Activated CD8-positive, alpha-beta memory T cell treated with anti-CD3 and anti-CD28 coated beads, Interleukin-2, amount 10 ng/mL, durations not matched to agents 7 days and 5 days (primary cell): ENCODE measurements at regions of chr2 and their contacts with region 1.

Region 1: DNA sequence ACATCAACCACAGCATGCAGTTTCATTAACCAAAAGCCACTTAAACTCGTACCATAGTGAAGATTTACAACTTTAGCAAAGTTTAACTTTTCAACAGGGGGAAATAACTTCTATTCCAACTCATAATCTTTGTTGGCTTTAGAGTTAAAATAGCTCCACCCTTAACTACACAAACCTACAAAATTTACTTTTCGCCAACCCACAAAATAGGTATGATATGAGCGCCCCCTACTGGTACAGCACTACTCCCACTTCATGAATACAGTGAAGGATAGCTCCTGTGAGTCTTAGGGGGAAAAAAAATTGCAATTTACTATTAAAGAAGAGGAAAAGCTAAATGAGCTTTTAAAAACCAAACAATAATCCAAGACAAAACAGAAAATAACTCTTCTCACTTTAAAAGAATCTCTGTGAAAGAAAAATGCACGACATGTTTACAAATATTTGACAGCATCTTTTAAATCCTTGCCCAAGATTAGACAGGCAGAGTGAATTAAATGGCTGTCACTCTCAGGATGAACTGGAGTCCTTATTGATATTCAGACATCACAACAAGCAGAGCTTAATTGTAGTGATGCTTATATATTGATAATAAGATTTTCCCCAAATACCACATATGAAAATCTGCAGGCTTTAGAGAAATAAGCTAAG is 32.2 kb downstream of the TMEFF2 start:
- DNase-seq: peak; percentile 67
- ATAC-seq: peak; percentile 70
- H3K4me3 Mint-ChIP-seq: no peak overlapping the region
- H3K27ac Mint-ChIP-seq: no peak overlapping the region
- H3K4me1 Mint-ChIP-seq: peaks cover 10% of the 10 kb centered on the region
- H3K27me3 Mint-ChIP-seq: peaks cover 25% of the 10 kb centered on the region

Region 2: GRCh38 chr2:191539068-191539467 is 623.4 kb before region 1 on chr2:
- CTCF ChIA-PET with region 1: interaction called, 13 read pairs
- DNase-seq: no peak
- ATAC-seq: no peak
- H3K4me3 Mint-ChIP-seq: no peak overlapping the region
- H3K27ac Mint-ChIP-seq: no peak overlapping the region
- H3K4me1 Mint-ChIP-seq: no peaks in the 10 kb centered on the region
- H3K27me3 Mint-ChIP-seq: peaks cover 7% of the 10 kb centered on the region

Region 3: DNA sequence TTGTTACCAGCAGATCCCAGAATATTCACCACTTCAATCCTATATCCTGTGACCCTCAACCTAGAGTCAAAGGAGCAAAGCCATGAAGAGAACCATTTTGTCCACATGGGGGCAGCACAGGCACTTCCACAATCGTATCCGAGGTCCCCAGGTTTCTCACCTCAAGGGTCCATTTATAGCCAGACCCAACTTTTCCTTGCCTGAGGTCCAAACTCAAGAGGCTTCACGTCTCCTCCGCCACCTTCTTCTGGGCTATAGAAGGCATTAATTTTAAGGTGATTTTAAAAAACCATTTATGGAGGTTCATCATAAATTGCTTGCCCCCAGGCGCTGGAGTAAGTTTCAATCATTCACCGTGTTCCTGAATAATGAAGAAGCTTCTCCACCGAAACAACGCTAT is 596.2 kb before region 1 on chr2:
- CTCF ChIA-PET with region 1: interaction called, 22 read pairs
- DNase-seq: peak; percentile 74
- ATAC-seq: peak; percentile 71
- H3K4me3 Mint-ChIP-seq: no peak overlapping the region
- H3K27ac Mint-ChIP-seq: no peak overlapping the region
- H3K4me1 Mint-ChIP-seq: peaks cover 48% of the 10 kb centered on the region
- H3K27me3 Mint-ChIP-seq: peaks cover 79% of the 10 kb centered on the region

Region 4: GRCh38 chr2:191758518-191759507 is 403.7 kb before region 1 on chr2:
- CTCF ChIA-PET with region 1: interaction called, 10 read pairs
- DNase-seq: peak; percentile 72
- ATAC-seq: peak; percentile 96
- H3K4me3 Mint-ChIP-seq: no peak overlapping the region
- H3K27ac Mint-ChIP-seq: no peak overlapping the region
- H3K4me1 Mint-ChIP-seq: peaks cover 5% of the 10 kb centered on the region
- H3K27me3 Mint-ChIP-seq: peaks cover 12% of the 10 kb centered on the region

Region 5: DNA sequence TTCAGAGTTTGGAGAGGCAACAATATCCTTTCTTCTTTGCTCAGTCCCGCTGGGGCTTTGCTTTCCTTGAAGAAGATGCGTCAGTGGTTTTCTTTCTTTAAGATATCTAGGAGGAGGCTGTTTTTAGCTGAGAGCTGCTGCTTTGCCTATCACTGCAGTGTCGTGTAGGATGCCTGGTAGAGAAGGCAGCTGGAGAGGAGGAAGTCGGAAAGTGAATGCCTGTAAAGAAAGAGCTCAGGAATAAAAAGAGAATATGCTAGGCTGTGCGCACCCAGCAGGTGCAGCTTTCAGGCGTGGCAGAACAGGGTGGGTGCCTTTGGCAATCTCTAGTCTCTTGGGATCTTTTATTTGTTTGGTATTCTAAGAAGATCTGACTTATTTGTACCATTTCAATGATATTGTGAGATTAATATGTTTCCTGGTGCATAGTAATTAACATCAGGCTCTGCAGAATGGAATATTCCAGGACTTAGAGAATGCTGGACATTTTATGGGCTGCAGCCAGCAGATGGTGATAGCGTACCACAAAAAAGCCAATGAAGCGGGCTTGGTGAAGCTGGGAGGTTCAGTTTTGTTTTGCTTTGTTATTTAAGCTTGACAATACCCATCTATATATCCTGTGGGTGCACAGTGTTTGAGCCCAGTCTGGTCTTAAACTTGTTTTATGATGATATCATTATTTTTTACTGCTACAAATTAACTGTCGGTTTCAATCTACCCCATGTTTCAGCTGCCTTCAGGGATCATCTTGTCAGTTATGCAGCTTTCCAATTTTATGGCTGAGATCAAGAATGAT is 350.5 kb before region 1 on chr2:
- CTCF ChIA-PET with region 1: interaction called, 31 read pairs
- DNase-seq: peak; percentile 47
- ATAC-seq: peak; percentile 47
- H3K4me3 Mint-ChIP-seq: no peak overlapping the region
- H3K27ac Mint-ChIP-seq: no peak overlapping the region
- H3K4me1 Mint-ChIP-seq: no peaks in the 10 kb centered on the region
- H3K27me3 Mint-ChIP-seq: peaks cover 24% of the 10 kb centered on the region